ENCODE measurements at regions of chr19 and their contacts with region 1.

Region 1: DNA sequence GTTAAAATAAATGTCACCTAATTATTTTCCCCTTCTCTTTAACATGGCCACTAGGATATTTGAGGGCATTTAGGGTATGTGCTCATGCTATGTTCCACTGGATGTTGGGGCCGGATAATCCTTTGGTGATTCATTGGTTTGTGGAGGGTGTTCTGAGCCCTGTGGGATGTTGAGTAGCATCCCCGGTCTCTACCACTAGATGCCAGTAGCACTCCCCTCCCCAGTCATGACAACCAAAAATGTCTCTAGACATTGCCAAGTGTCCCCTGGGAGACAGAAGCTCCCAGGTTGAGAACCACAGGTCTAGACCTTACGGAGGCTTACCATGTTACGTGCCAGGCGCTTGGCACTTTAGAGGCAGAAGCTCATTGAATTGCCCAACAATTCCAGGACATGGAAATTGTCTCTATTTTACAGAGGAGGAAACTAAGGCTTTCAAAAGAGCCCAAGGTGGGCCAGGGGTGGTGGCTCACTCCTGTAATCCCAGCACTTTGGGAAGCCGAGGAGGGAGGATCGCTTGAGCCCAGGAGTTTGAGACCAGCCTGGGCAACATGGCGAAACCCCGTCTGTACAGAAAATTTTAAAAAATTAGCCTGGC is 14.1 kb downstream of the SHANK1 start:
- DNase-seq: peak; percentile 92
- H3K4me3 ChIP-seq: no peak overlapping the region
- H3K27ac ChIP-seq: no peak overlapping the region
- H3K4me1 ChIP-seq: peaks cover 14% of the 10 kb centered on the region
- H3K27me3 ChIP-seq: no peaks in the 10 kb centered on the region
- CTCF ChIP-seq: peak; percentile 88

Region 2: GRCh38 chr19:50607874-50608785 is 97.4 kb before region 1 on chr19:
- CTCF ChIA-PET with region 1: interaction called, 10 read pairs
- POLR2A ChIA-PET with region 1: no interaction called
- intact Hi-C with region 1: no loop called
- DNase-seq: peak; percentile 98
- H3K4me3 ChIP-seq: peak overlapping the region; percentile 38
- H3K27ac ChIP-seq: no peak overlapping the region
- H3K4me1 ChIP-seq: peaks cover 5% of the 10 kb centered on the region
- H3K27me3 ChIP-seq: no peaks in the 10 kb centered on the region
- CTCF ChIP-seq: peak; percentile 96

Region 3: DNA sequence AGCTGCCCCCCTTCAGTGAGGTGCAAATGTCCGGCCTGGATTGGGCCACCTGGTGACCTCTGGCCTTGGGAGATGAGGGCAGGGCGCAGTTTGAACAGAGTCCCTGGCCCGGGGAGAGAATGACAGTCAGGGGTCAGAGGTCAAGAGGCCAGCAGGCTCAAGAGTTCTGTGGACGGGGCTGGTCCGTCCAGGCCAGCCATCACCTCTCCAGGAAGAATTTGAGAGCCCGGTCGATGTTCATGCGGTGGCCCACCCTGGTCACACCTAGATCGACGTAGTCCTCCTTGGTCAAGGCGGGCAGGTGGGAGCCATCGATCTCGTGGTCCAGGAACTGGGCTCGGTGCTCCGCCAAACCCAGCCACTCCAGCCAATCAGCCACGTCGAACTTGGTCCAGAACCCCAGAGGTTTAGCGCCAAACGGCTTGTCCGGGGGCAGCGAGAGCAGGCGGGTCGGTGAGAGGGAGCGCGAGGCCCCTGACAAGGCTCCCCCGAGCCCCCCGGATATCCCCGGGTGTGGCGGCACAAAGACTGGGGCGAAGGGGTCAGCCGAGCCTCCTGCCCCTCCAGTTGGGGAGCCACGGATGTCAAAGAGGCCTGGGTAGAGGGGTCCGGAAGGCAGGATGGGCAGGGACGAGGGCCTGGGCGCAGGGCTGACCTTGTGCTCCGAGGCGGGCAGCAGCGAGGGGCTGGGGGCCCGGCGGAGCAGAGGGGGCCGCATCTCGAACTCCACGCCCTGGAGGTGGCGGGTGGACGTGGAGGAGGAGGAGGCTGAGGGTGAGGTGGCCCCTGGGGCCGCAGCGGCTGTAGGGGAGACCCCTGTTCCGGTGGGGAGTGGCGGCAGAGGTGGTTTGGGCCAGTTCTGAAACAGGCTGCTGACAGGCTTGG is 43.5 kb before region 1 on chr19:
- CTCF ChIA-PET with region 1: no interaction called
- POLR2A ChIA-PET with region 1: no interaction called
- intact Hi-C with region 1: no loop called
- DNase-seq: no peak
- H3K4me3 ChIP-seq: no peak overlapping the region
- H3K27ac ChIP-seq: no peak overlapping the region
- H3K4me1 ChIP-seq: peaks cover 11% of the 10 kb centered on the region
- H3K27me3 ChIP-seq: peaks cover 13% of the 10 kb centered on the region
- CTCF ChIP-seq: no peak

Region 4: GRCh38 chr19:50724522-50725217 is 19.1 kb after region 1 on chr19:
- CTCF ChIA-PET with region 1: interaction called, 9 read pairs
- POLR2A ChIA-PET with region 1: interaction called, 10 read pairs
- intact Hi-C with region 1: no loop called
- DNase-seq: peak; percentile 100
- H3K4me3 ChIP-seq: peak overlapping the region; percentile 61
- H3K27ac ChIP-seq: peak overlapping the region; percentile 85
- H3K4me1 ChIP-seq: peaks cover 71% of the 10 kb centered on the region
- H3K27me3 ChIP-seq: no peaks in the 10 kb centered on the region
- CTCF ChIP-seq: peak; percentile 93

Region 5: DNA sequence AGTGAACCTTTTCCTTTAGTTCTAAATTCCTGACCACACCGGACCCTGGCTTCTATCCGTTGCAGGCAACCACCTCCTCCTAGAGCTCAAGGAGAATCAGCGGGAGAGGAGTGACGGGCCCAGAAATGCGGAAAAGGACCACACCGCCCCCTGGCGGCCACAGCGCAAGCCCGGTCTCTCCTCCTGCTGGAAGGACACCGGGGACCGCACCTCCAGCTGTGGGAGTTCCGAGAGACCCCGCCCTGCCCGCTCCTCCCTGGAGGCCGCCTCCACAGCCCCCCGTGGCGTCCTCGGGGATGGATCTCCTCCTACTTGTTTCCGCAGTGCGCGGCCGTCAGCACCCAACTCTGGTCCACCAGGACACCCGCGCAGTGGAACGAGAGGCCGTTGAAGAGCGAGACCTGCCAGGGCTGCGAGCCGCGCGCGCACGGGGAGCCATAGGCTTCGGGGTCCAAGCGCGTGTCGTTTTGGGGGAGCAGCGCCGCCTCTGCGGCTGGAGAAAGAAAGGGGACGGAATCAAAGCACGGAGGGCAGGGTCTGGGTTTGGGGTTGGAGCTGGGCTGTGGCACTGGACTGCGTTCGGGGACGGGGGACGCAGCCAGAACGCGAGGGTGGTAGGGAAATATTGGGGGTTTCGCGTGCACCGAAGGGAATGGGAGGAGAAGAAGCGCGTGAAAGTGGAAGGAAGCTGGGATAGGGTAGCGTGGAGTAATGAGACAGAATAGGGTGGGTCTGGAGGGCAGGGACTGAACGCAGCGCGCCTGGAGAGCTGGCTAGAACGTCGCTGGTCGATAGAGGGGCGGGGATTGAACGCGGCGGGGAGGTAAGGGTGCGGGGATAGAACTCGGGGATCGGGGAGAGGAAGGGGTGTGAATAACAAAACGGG is 311.5 kb after region 1 on chr19:
- CTCF ChIA-PET with region 1: interaction called, 8 read pairs
- POLR2A ChIA-PET with region 1: no interaction called
- intact Hi-C with region 1: loop called (anchors 10 kb)
- DNase-seq: peak; percentile 85
- H3K4me3 ChIP-seq: peak overlapping the region; percentile 40
- H3K27ac ChIP-seq: no peak overlapping the region
- H3K4me1 ChIP-seq: peaks cover 7% of the 10 kb centered on the region
- H3K27me3 ChIP-seq: peaks cover 54% of the 10 kb centered on the region
- CTCF ChIP-seq: peak; percentile 92

Region 6: GRCh38 chr19:51097166-51097738 is 391.7 kb after region 1 on chr19:
- CTCF ChIA-PET with region 1: no interaction called
- POLR2A ChIA-PET with region 1: no interaction called
- intact Hi-C with region 1: loop called (anchors 5 kb)
- DNase-seq: peak; percentile 52
- H3K4me3 ChIP-seq: no peak overlapping the region
- H3K27ac ChIP-seq: no peak overlapping the region
- H3K4me1 ChIP-seq: no peaks in the 10 kb centered on the region
- H3K27me3 ChIP-seq: no peaks in the 10 kb centered on the region
- CTCF ChIP-seq: peak; percentile 68